Activated B cell treated with CpG ODN at 0.5 μM for 24 hours (primary cell): ENCODE measurements at regions of chr5 and their contacts with region 1.

Region 1: GRCh38 chr5:124735169-124735858 is 11.1 kb downstream of the ZNF608 start:
- DNase-seq: no peak
- ATAC-seq: peak; percentile 45
- H3K4me3 Mint-ChIP-seq: peak overlapping the region; percentile 73
- H3K27ac Mint-ChIP-seq: peak overlapping the region; percentile 54
- H3K4me1 Mint-ChIP-seq: peaks cover 82% of the 10 kb centered on the region
- H3K27me3 Mint-ChIP-seq: no peaks in the 10 kb centered on the region
- CTCF ChIP-seq: no peak

Region 2: GRCh38 chr5:124289641-124290311 is 445.5 kb before region 1 on chr5:
- CTCF ChIA-PET with region 1: no interaction called
- POLR2A ChIA-PET with region 1: no interaction called
- intact Hi-C with region 1: no loop called
- DNase-seq: no peak
- ATAC-seq: no peak
- H3K4me3 Mint-ChIP-seq: no peak overlapping the region
- H3K27ac Mint-ChIP-seq: no peak overlapping the region
- H3K4me1 Mint-ChIP-seq: no peaks in the 10 kb centered on the region
- H3K27me3 Mint-ChIP-seq: no peaks in the 10 kb centered on the region
- CTCF ChIP-seq: no peak

Region 3: DNA sequence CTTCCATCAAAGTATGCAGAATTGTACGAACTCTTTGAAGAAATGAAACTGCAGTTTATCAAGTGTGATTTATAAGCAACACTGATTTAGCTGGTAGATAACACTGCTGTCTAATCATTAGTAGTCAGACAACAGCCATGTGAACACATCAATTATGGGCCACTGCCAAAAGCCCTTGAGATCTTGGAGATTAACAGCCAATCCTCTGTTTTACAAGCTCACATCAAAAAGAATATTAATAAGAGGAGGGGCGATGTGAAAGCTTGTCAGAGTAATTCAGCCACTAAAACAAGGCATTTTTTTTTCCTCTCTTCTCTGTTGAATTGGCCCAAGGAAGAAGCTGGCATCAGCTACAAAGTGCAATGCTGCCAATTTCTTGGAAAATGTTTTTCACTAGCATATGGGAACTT is 16.9 kb before region 1 on chr5:
- CTCF ChIA-PET with region 1: no interaction called
- POLR2A ChIA-PET with region 1: interaction called, 10 read pairs
- intact Hi-C with region 1: loop called (anchors 2 kb)
- DNase-seq: no peak
- ATAC-seq: no peak
- H3K4me3 Mint-ChIP-seq: peak overlapping the region; percentile 37
- H3K27ac Mint-ChIP-seq: peak overlapping the region; percentile 65
- H3K4me1 Mint-ChIP-seq: peaks cover 60% of the 10 kb centered on the region
- H3K27me3 Mint-ChIP-seq: no peaks in the 10 kb centered on the region
- CTCF ChIP-seq: no peak

Region 4: DNA sequence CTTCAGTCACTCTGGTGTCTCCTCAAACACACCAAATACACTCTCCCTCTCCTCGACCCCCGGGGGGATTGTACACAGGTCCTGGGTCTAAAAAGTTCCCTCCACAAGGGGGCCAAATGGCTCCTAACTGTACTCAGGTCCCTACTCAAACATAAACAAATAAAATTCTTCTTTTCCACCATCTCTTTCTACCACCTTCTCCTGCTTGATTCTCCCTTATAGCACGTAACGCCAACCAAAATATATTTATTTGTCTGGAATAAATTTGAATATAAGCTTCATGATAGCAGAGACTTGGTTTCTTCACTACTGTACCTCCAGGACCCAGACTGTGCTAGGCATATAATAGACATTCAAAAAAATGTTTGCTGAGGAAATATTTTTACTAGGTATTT is 10.3 kb before region 1 on chr5:
- CTCF ChIA-PET with region 1: interaction called, 4 read pairs
- POLR2A ChIA-PET with region 1: interaction called, 4 read pairs
- intact Hi-C with region 1: loop called (anchors 1 kb)
- DNase-seq: no peak
- ATAC-seq: peak; percentile 77
- H3K4me3 Mint-ChIP-seq: peak overlapping the region; percentile 83
- H3K27ac Mint-ChIP-seq: peak overlapping the region; percentile 84
- H3K4me1 Mint-ChIP-seq: peaks cover 53% of the 10 kb centered on the region
- H3K27me3 Mint-ChIP-seq: no peaks in the 10 kb centered on the region
- CTCF ChIP-seq: no peak